K562 (cell line): ENCODE measurements at regions of chr6 and their contacts with region 1.

Region 1: GRCh38 chr6:127342946-127343808 is at the start of gene ECHDC1:
- DNase-seq: peak; percentile 58 to 88 (median 68)
- ATAC-seq: peak; percentile 86
- H3K4me3 ChIP-seq: peak within 1 kb of the TSS; percentile 77
- H3K27ac ChIP-seq: peak within 1 kb of the TSS; percentile 91
- H3K4me1 ChIP-seq: peaks cover 3 to 14% of the 10 kb centered on the region in 2 experiments; a peak in 3 of 5 replicates
- H3K27me3 ChIP-seq: no peaks in the 10 kb centered on the region
- CTCF ChIP-seq: 0 out of 6 replicates have a peak, but pooled peaks of 1 of the 3 experiments have one; percentile 10
- EP300 ChIP-seq: no peak; the same call in 1 of the 2 replicates
- POLR2A ChIP-seq: peak; percentile 92
- RAD21 ChIP-seq: no peak
- polyA plus RNA-seq, gene ECHDC1: 96.5 to 103 TPM

Region 2: DNA sequence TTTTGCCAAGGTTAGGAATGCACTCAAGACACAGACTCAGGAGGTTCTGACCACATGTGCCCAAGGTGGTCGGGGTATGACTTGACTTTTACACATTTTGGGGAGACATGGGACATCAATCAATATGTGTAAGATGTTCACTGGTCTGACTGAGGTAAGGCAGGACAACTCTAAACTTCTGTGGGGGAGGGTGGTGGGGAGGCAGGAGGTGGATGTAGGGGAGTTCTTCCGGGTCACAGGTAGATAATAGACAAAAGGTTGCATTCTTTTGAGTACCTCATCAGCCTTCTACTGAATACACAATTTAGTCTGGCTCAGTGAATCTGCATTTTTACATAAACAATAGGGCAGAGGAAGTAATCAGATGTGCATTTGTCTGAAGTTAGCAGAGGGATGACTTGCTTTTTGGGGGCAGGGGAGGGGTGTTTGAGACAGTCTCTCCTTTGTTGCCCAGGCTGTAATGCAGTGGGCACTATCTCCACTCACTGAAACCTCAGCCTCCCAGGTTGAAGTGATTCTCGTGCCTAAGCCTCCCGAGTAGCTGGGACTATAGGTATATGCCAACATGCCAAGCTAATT is 10.7 kb before region 1 on chr6:
- CTCF ChIA-PET with region 1: no interaction called
- POLR2A ChIA-PET with region 1: interaction called, 11 read pairs
- in situ Hi-C with region 1: no loop called
- intact Hi-C with region 1: no loop called
- DNase-seq: no peak
- ATAC-seq: peak; percentile 65
- H3K4me3 ChIP-seq: no peak overlapping the region
- H3K27ac ChIP-seq: no peak overlapping the region; the same call in 2 of the 3 replicates
- H3K4me1 ChIP-seq: peaks cover 0 to 9% of the 10 kb centered on the region in 2 experiments; a peak in 2 of 5 replicates
- H3K27me3 ChIP-seq: no peaks in the 10 kb centered on the region
- CTCF ChIP-seq: no peak
- EP300 ChIP-seq: no peak
- POLR2A ChIP-seq: no peak
- RAD21 ChIP-seq: no peak

Region 3: DNA sequence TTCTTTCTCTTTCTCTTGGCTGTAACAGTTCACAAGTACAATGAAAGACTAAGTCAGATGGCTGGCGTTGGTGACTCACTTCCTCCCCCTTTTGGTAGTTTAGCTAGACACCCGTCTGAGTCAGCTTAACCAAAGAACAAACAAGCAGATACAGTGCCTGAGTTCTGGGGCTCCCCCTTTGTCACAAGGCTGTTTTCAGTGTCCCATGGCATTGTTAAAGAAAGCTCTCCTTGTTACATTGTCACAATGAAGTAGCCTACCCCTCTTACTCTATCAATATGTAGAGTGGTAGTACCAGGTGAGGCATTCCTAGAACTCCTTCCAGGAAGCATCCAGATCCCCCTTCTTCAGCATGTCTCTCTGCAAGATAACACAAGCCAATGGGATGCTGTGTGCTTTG is 77.4 kb after region 1 on chr6:
- CTCF ChIA-PET with region 1: no interaction called
- POLR2A ChIA-PET with region 1: no interaction called
- in situ Hi-C with region 1: no loop called
- intact Hi-C with region 1: loop called (anchors 5 kb)
- DNase-seq: peak; percentile 29 to 80 (median 51)
- ATAC-seq: peak; percentile 97
- H3K4me3 ChIP-seq: no peak overlapping the region
- H3K27ac ChIP-seq: no peak overlapping the region
- H3K4me1 ChIP-seq: no peaks in the 10 kb centered on the region
- H3K27me3 ChIP-seq: no peaks in the 10 kb centered on the region; a peak in 1 of 5 replicates
- CTCF ChIP-seq: peak; percentile 65 to 75 (median 67)
- EP300 ChIP-seq: no peak
- POLR2A ChIP-seq: no peak
- RAD21 ChIP-seq: peak; percentile 72 to 83

Region 4: DNA sequence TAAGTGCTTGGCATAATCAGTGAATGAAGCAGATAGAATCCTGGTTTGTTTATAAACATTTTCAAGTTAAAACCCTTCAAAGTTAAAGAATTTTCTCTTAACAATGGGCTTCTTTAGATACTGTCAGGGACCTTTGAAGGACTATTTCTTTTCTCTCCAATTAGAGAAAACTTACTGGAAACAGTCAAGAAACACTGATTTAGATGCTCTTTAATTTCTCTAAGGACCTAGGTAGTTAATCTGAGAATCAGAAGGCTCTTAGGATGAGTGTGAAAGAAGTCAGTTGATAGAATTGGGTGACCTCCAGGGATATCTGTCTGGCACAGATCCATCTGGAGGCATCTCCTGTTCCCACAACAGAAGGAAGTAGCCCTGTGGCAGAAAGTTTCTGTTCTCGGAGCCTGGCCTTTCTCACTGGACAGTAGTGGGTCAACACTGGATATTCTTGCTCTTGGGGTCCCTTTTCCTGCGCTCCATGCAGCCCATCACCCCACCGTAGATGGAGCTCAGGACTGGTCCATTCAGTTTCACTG is 93.5 kb after region 1 on chr6:
- CTCF ChIA-PET with region 1: no interaction called
- POLR2A ChIA-PET with region 1: no interaction called
- in situ Hi-C with region 1: no loop called
- intact Hi-C with region 1: no loop called
- DNase-seq: no peak
- ATAC-seq: no peak
- H3K4me3 ChIP-seq: no peak overlapping the region
- H3K27ac ChIP-seq: no peak overlapping the region
- H3K4me1 ChIP-seq: no peaks in the 10 kb centered on the region
- H3K27me3 ChIP-seq: no peaks in the 10 kb centered on the region; a peak in 1 of 5 replicates
- CTCF ChIP-seq: no peak
- EP300 ChIP-seq: no peak
- POLR2A ChIP-seq: no peak
- RAD21 ChIP-seq: no peak